Activated naive CD8-positive, alpha-beta T cell treated with anti-CD3 and anti-CD28 coated beads, Interleukin-2, amount 10 ng/mL, durations not matched to agents 7 days and 5 days (primary cell): ENCODE measurements at regions of chr19 and their contacts with region 1.

Region 1: DNA sequence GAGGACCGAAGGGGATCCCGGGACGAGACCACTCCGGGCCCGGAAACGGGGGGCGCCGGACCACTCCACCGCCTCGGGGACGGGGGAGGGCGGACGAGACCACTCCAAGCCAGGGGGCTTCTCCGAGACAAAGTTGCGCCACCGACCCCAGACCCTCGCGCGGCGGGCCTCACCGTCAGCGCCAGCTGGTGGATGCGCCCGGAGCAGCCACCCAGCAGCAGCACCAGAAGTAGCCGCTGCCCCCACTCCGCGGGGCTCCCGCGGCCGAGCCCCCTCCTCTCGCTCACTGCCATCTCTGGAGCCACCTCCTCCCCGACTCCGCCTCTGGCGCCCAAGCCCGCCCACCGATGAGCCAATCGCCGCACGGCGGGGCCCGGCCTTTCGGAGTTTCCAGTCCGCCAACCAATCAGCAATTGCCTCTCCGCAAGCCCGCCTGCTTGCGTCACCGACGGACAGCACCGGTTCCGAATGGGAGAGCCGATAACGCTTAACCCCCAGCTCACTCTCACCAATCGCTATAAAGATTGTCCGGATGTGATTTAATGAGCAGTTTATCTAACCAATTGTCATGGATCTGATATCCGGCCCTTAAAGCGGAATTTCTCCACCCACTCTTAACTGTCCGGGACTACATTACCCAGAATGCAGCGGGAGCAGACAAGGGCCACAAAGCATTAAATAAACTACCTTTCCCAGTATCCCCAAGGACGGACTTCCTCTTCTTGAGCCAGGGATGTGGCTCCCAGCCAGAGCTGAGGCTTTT is at the start of gene GPR108:
- DNase-seq: peak; percentile 99
- ATAC-seq: peak; percentile 78
- H3K4me3 Mint-ChIP-seq: peak within 1 kb of the TSS; percentile 98
- H3K27ac Mint-ChIP-seq: peak within 1 kb of the TSS; percentile 100
- H3K4me1 Mint-ChIP-seq: peaks cover 26% of the 10 kb centered on the region
- H3K27me3 Mint-ChIP-seq: no peaks in the 10 kb centered on the region
- total RNA-seq, gene GPR108: 82.8 to 91.7 TPM

Region 2: DNA sequence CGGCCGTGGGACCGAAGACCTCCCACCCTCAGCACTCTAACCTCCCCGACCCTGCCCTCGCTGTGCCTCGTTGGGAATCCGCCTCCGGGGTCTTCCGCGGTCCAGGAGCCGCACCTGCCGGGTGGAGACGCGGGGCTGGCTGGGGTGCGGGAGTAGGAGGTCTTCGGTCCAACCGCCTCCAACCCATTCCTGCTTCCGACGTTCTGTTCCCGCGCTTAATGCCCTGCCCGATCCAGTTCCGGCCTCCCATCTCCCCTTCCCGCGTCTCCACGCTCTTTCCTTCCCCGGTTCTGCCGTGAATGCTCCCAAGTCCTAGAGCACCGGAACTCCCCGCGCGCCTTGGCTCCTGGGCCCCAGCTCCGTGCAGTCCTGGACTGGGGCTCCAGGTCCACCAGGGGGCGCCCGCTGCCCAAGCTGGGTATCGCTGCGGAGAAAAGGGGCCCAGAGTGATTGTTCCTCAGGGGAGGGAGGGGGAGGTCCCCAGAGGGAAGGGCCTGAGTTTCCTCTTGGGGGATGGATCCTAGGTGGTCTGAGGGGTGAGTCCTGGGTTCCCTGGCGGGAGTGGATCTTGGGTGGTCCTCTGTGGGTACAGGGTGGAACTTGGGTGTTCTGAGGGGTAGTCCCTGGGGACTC is 220.7 kb before region 1 on chr19:
- POLR2A ChIA-PET with region 1: interaction called, 23 read pairs
- DNase-seq: peak; percentile 97
- ATAC-seq: peak; percentile 83
- H3K4me3 Mint-ChIP-seq: peak overlapping the region; percentile 93
- H3K27ac Mint-ChIP-seq: peak overlapping the region; percentile 98
- H3K4me1 Mint-ChIP-seq: peaks cover 29% of the 10 kb centered on the region
- H3K27me3 Mint-ChIP-seq: no peaks in the 10 kb centered on the region

Region 3: DNA sequence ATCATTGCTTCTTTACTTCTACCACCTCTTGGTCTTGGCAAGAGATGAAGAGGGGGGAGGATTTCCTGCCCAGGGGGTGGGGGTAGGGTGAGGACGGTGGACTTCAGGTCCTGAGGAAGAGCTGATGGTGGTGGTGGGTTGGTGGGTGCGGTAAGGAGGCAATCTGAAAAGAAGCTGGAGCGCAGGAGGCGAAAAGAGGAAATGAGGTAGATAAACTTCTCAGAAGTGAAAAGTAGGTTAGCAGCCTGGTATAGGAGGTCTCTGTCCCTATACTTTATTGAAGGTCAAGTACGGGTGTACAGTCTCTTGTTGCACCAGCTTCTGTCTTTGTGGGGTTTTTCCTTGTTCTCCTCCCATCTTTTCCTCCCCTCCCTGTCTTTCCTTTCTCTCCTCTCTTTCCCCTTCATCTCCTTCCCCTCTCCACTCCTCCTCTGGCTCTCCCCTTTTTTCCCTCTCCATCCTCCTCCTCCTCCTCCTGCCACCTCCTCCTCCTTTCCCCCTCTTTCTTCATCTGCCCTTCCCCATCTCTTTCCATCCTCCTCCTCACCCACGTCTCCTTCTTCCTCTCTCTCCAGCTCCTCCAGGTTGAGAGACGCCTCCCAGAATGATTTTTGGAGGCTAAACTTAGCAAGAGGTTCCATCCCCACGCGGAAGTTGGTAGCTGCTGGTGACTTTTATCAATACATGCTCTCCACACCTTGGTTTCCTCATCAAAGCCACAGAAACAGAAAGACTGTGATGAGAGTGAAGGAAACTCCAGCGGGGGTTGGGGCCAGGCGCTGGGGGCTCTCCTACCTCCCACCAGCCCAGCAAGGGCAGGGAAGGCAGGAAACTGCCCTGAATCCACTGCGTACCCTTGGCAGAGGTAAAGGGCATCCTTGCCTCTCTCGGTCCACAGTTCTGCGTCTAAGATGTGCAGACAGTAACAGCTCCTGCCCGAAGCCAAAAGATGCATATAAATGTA is 82.8 kb before region 1 on chr19:
- POLR2A ChIA-PET with region 1: interaction called, 16 read pairs
- DNase-seq: peak; percentile 69
- ATAC-seq: peak; percentile 72
- H3K4me3 Mint-ChIP-seq: peak overlapping the region; percentile 88
- H3K27ac Mint-ChIP-seq: peak overlapping the region; percentile 94
- H3K4me1 Mint-ChIP-seq: peaks cover 54% of the 10 kb centered on the region
- H3K27me3 Mint-ChIP-seq: no peaks in the 10 kb centered on the region

Region 4: DNA sequence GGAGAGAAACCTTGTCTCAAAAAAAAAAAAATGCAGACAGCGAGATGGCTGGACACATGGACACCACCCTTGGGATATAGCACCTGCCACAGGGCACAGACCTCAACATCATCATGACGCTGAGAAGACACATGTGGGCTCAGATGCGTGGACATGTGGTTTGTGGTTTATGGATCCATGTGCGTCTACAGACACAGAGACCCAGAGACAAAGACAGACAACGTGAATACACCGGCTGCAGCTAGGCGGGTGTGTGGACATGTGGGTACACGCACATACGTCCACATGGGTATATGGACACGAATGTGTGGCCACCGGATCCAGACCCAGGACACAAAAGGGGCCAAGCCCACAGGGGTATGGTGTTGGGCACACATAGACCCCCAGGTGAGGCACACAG is 68.8 kb before region 1 on chr19:
- POLR2A ChIA-PET with region 1: interaction called, 18 read pairs
- DNase-seq: no peak
- ATAC-seq: no peak
- H3K4me3 Mint-ChIP-seq: peak overlapping the region; percentile 92
- H3K27ac Mint-ChIP-seq: peak overlapping the region; percentile 94
- H3K4me1 Mint-ChIP-seq: peaks cover 22% of the 10 kb centered on the region
- H3K27me3 Mint-ChIP-seq: no peaks in the 10 kb centered on the region

Region 5: DNA sequence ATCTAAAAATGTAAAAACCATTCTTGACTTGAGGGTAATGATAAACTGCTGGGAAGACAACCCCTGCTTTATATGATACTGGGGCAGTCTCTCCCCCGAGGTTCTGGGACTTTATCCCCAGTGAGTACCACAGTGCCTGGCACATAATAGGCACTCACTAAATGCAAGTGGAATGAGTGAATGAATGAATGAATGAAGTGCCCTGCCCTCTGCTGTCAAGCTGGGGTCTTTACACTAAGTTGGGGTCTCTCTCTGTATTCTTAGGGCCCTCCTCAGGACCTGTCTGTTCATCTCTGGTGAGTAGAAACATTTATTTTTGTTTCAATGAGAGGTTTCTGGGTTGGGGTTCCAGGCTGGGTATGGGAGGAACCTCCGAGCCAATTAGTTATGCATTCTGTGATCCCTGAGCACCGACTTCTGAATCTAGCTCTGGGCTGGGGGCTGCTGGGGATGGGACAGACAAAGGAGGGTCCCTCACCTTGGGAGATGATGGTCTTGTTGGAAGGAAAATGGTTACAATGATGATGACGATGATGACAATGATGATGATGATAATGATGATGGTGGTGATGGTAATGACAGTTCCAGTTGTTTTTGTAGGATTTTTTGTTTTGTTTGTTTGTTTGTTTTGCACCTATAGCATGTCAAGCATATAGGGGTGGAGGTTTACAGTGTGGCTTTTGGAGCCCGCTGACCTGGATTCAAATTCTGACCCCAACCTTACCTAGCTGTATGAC is 105.6 kb after region 1 on chr19:
- POLR2A ChIA-PET with region 1: interaction called, 10 read pairs
- DNase-seq: peak; percentile 3
- ATAC-seq: no peak
- H3K4me3 Mint-ChIP-seq: no peak overlapping the region
- H3K27ac Mint-ChIP-seq: no peak overlapping the region
- H3K4me1 Mint-ChIP-seq: peaks cover 3% of the 10 kb centered on the region
- H3K27me3 Mint-ChIP-seq: no peaks in the 10 kb centered on the region